Panc1 (cell line): ENCODE measurements at regions of chr17 and their contacts with region 1.

Region 1: DNA sequence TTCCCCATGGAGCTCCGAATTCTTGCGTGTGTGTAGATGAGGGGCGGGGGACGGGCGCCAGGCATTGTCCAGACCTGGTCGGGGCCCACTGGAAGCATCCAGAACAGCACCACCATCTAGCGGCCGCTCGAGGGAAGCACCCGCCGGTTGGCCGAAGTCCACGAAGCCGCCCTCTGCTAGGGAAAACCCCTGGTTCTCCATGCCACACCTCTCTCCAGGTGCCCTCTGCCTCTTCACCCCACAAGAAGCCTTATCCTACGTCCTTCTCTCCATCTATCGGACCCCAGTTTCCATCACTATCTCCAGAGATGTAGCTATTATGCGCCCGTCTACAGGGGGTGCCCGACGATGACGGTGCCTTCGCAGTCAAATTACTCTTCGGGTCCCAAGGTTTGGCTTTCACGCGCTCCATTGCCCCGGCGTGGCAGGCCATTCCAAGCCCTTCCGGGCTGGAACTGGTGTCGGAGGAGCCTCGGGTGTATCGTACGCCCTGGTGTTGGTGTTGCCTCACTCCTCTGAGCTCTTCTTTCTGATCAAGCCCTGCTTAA is 617 bp upstream of the SENP3 start:
- DNase-seq: peak; percentile 82
- ATAC-seq: peak; percentile 76
- H3K4me3 ChIP-seq: peak overlapping the region; percentile 75 to 80
- H3K27ac ChIP-seq: peak overlapping the region; percentile 88
- H3K4me1 ChIP-seq: peaks cover 30% of the 10 kb centered on the region
- H3K27me3 ChIP-seq: no peaks in the 10 kb centered on the region
- CTCF ChIP-seq: peak; percentile 90

Region 2: GRCh38 chr17:7513850-7514419 is 47.2 kb before region 1 on chr17:
- CTCF ChIA-PET with region 1: interaction called, 10 read pairs
- POLR2A ChIA-PET with region 1: no interaction called
- in situ Hi-C with region 1: no loop called
- intact Hi-C with region 1: no loop called
- DNase-seq: no peak
- ATAC-seq: 0 out of 2 replicates have a peak, but pooled peaks have one; percentile 22
- H3K4me3 ChIP-seq: no peak overlapping the region
- H3K27ac ChIP-seq: no peak overlapping the region
- H3K4me1 ChIP-seq: no peaks in the 10 kb centered on the region
- H3K27me3 ChIP-seq: no peaks in the 10 kb centered on the region
- CTCF ChIP-seq: no peak